Tibial artery (tissue), 4 donors: ENCODE measurements at regions of chr2 and their contacts with region 1.

Region 1: GRCh38 chr2:216519154-216519762 is 20.6 kb downstream of the RPL37A start:
- DNase-seq: peak in 1 of 2 donors; percentile 71
- H3K4me3 ChIP-seq: no peak overlapping the region
- H3K27ac ChIP-seq: peak overlapping the region in 1 of 2 donors; percentile 38
- H3K4me1 ChIP-seq: peaks cover 0 to 18% (median 2%) of the 10 kb centered on the region in 4 donors
- H3K27me3 ChIP-seq: no peaks in the 10 kb centered on the region
- CTCF ChIP-seq: peak; percentile 76 to 91

Region 2: GRCh38 chr2:216394881-216395280 is 124.4 kb before region 1 on chr2:
- intact Hi-C with region 1: no loop called
- DNase-seq: no peak
- H3K4me3 ChIP-seq: no peak overlapping the region
- H3K27ac ChIP-seq: no peak overlapping the region
- H3K4me1 ChIP-seq: no peaks in the 10 kb centered on the region
- H3K27me3 ChIP-seq: peaks cover 0 to 1% of the 10 kb centered on the region in 2 donors
- CTCF ChIP-seq: no peak

Region 3: GRCh38 chr2:216572582-216573578 is 53.6 kb after region 1 on chr2:
- intact Hi-C with region 1: no loop called
- DNase-seq: peak; percentile 83 to 93
- H3K4me3 ChIP-seq: no peak overlapping the region
- H3K27ac ChIP-seq: peak overlapping the region; percentile 71 to 80
- H3K4me1 ChIP-seq: peaks cover 0 to 46% (median 25%) of the 10 kb centered on the region in 4 donors
- H3K27me3 ChIP-seq: no peaks in the 10 kb centered on the region
- CTCF ChIP-seq: no peak

Region 4: GRCh38 chr2:216664593-216665034 is 145.4 kb after region 1 on chr2:
- intact Hi-C with region 1: loop called (anchors 2 kb)
- DNase-seq: no peak
- H3K4me3 ChIP-seq: no peak overlapping the region
- H3K27ac ChIP-seq: peak overlapping the region; percentile 9 to 43
- H3K4me1 ChIP-seq: peaks cover 0 to 27% (median 16%) of the 10 kb centered on the region in 4 donors
- H3K27me3 ChIP-seq: no peaks in the 10 kb centered on the region
- CTCF ChIP-seq: no peak

Region 5: DNA sequence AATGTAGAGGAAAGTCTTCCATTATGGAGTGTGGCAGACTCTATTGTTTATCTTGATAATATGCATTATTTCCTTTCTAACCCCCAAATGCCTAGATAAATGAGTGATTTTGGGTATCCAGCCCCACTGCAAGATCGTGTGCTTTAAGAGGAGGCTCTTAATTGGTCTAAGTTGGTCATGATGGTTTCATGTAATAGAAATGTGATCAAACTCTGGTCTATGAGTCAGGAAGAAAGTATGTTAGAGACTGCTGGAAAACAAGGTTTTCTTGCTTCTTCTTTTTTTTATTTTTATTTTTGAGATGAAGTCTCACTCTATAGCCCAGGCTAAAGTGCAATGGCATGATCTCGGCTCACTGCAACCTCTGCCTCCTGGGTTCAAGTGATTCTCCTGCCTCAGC is 685.1 kb after region 1 on chr2:
- intact Hi-C with region 1: no loop called
- DNase-seq: no peak
- H3K4me3 ChIP-seq: no peak overlapping the region
- H3K27ac ChIP-seq: no peak overlapping the region
- H3K4me1 ChIP-seq: peaks cover 0 to 14% (median 4%) of the 10 kb centered on the region in 4 donors
- H3K27me3 ChIP-seq: no peaks in the 10 kb centered on the region
- CTCF ChIP-seq: no peak

Region 6: GRCh38 chr2:217510771-217511291 is 991.6 kb after region 1 on chr2:
- intact Hi-C with region 1: loop called (anchors 10 kb)
- DNase-seq: peak; percentile 47 to 75
- H3K4me3 ChIP-seq: no peak overlapping the region
- H3K27ac ChIP-seq: peak overlapping the region in 1 of 2 donors; percentile 26
- H3K4me1 ChIP-seq: peaks cover 0 to 12% (median 5%) of the 10 kb centered on the region in 4 donors
- H3K27me3 ChIP-seq: no peaks in the 10 kb centered on the region
- CTCF ChIP-seq: peak; percentile 79 to 80